Colonic mucosa (tissue), 4 donors: ENCODE measurements at regions of chr1 and their contacts with region 1.

Region 1: DNA sequence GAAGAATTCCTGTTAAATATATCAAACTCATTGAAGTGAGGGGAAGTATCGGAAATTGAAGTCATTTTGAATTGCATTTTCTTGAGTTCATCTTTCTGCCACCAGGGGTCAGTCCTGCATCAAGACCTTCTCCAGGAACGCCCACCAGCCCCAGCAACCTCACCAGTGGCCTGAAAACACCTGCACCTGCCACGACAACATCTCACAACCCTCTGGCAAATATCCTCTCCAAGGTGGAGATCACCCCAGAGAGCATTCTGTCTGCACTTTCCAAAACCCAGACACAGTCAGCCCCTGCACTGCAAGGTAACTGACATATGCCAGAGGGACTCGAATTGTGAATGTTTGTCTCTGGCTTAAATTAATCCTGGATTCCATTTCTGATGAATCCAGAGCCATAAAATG is 22.8 kb upstream of the TARS2 start:
- DNase-seq: peak; percentile 71
- H3K4me3 ChIP-seq: no peak overlapping the region
- H3K27ac ChIP-seq: no peak overlapping the region
- H3K4me1 ChIP-seq: no peaks in the 10 kb centered on the region
- H3K27me3 ChIP-seq: no peaks in the 10 kb centered on the region
- CTCF ChIP-seq: peak; percentile 82

Region 2: GRCh38 chr1:150406483-150406882 is 57.9 kb before region 1 on chr1:
- intact Hi-C with region 1: no loop called
- DNase-seq: no peak
- H3K4me3 ChIP-seq: no peak overlapping the region
- H3K27ac ChIP-seq: no peak overlapping the region
- H3K4me1 ChIP-seq: no peaks in the 10 kb centered on the region
- H3K27me3 ChIP-seq: no peaks in the 10 kb centered on the region
- CTCF ChIP-seq: no peak

Region 3: DNA sequence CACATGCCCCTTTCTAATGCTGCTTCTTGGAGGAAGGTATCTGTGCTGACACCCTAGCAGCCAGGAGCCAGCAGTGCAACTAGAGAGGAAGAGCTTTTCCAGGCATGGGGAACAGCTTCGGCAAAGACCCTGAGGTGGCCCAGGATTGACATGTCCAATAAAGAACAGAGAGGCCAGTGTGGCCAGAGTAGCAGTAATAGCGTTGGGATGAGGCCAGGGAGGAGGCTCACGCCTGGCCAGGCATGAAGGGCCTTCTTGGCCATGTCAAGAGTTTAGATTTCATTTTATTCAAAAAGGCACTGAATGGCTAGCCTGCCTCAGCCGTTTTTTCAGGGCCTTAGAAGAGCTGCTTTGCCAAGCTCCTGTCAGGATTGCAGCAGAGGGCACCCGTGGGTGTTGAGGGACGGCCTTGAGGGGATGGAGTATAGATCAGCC is 68.5 kb after region 1 on chr1:
- intact Hi-C with region 1: loop called (anchors 5 kb)
- DNase-seq: no peak
- H3K4me3 ChIP-seq: no peak overlapping the region
- H3K27ac ChIP-seq: peak overlapping the region; percentile 83
- H3K4me1 ChIP-seq: peaks cover 6% of the 10 kb centered on the region
- H3K27me3 ChIP-seq: no peaks in the 10 kb centered on the region
- CTCF ChIP-seq: no peak

Region 4: DNA sequence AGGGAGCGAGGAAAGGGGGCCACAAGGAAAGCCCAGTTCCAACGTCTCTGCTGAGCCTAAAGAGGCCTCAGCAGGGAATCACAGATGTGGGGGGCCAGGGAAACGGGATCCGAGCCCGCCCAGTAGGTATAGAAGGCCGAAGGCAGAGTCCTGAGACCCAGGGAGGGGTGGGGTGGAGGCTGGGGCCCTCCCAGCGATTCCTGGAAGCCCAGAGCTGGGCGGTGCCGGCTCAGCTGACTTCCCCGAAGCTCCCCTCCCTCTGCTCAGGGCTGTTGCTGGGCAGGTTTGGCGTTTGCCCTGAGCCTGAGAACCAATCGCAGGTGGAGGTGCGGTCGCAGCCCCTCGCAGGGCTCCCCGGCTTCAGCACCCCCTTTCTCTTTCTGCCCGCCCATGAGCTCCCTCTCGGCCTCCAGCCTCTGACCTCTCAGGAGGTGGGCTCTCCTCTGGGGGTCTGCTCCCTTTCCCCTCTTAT is 97.6 kb after region 1 on chr1:
- intact Hi-C with region 1: loop called (anchors 2 kb)
- DNase-seq: peak; percentile 96
- H3K4me3 ChIP-seq: peak overlapping the region; percentile 42
- H3K27ac ChIP-seq: peak overlapping the region; percentile 98
- H3K4me1 ChIP-seq: peaks cover 41% of the 10 kb centered on the region
- H3K27me3 ChIP-seq: no peaks in the 10 kb centered on the region
- CTCF ChIP-seq: no peak

Region 5: GRCh38 chr1:150629115-150629928 is 164.9 kb after region 1 on chr1 and contains the start of gene ENSA:
- intact Hi-C with region 1: loop called (anchors 10 kb)
- DNase-seq: peak; percentile 97
- H3K4me3 ChIP-seq: peak within 1 kb of the TSS; percentile 55
- H3K27ac ChIP-seq: peak within 1 kb of the TSS; percentile 84
- H3K4me1 ChIP-seq: no peaks in the 10 kb centered on the region
- H3K27me3 ChIP-seq: no peaks in the 10 kb centered on the region
- CTCF ChIP-seq: no peak
- total RNA-seq, gene ENSA: 199 to 227 TPM